Caco-2 (cell line): ENCODE measurements at regions of chr6 and their contacts with region 1.

Region 1: DNA sequence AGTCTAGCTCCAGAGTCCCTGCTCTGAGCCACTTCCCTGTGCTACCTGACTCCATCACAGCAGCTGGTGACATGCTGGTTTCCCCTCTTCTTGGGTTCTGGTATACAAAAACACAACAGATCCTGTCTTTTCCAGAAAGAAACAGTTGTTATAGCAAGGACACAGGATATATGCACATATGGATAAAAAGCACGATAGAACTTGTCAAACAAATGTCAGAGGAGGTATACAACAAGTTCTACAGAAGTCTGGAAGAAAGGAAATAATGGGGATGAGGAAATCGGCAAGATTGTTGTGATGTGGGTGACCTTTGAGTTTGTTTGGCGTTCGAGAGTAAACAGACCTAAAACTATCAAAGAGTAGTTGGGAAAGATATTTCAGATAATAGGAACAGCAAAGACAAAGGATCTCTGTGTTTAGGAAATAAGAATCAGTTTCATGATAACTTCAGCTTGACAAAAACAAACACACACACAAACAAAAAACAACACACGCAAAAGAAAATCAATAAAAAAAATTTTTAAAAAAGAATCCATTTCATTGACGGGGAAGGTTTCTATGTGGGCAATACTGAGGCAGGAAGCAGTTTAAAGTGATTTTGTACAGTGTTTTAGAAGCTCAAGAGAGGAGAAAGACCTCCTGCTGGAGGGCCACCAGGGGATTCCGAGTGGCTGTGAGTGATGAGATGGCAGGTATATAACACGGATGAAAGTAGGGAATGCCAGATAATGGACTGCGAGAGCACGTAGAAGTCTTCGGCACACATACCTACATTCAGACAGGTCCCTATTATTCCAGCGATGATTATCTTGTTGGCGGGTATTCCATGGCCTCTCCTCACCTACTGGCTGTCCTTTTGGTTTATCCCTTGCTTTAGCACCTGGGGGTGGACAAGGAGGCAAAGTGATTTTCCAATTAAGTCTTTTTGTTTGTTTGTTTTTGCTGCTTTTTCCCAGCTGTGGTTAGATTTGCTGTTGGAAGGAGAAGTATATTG is 174.9 kb downstream of the HS3ST5 start:
- DNase-seq: peak; percentile 36 to 38
- H3K4me3 ChIP-seq: no peak overlapping the region
- H3K4me3 Mint-ChIP-seq: peak overlapping the region; percentile 52
- H3K27ac Mint-ChIP-seq: peak overlapping the region; percentile 12
- H3K4me1 ChIP-seq: peaks cover 48% of the 10 kb centered on the region
- H3K4me1 Mint-ChIP-seq: peaks cover 26% of the 10 kb centered on the region
- H3K27me3 ChIP-seq: no peaks in the 10 kb centered on the region
- H3K27me3 Mint-ChIP-seq: no peaks in the 10 kb centered on the region
- CTCF ChIP-seq: no peak

Region 2: GRCh38 chr6:114194362-114195026 is 26.6 kb after region 1 on chr6:
- CTCF ChIA-PET with region 1: interaction called, 4 read pairs
- POLR2A ChIA-PET with region 1: no interaction called
- intact Hi-C with region 1: loop called (anchors 1 kb)
- DNase-seq: peak in 1 of 2 experiments; percentile 7
- H3K4me3 ChIP-seq: no peak overlapping the region
- H3K4me3 Mint-ChIP-seq: no peak overlapping the region
- H3K27ac Mint-ChIP-seq: peak overlapping the region; percentile 89
- H3K4me1 ChIP-seq: peaks cover 22% of the 10 kb centered on the region
- H3K4me1 Mint-ChIP-seq: peaks cover 31% of the 10 kb centered on the region
- H3K27me3 ChIP-seq: no peaks in the 10 kb centered on the region
- H3K27me3 Mint-ChIP-seq: no peaks in the 10 kb centered on the region
- CTCF ChIP-seq: no peak